Activated T-helper 1 cell treated with anti-CD3 and anti-CD28 coated beads, Interleukin-12 subunit alpha, Interleukin-12 subunit beta, Interleukin-2, Interleukin-4 antibody, amounts not matched to agents 30 ng/mL and 10 ng/mL and 1 ng/mL, durations not matched to agents 14 hours and 24 hours and 36 hours (primary cell): ENCODE measurements at regions of chr18 and their contacts with region 1.

Region 1: DNA sequence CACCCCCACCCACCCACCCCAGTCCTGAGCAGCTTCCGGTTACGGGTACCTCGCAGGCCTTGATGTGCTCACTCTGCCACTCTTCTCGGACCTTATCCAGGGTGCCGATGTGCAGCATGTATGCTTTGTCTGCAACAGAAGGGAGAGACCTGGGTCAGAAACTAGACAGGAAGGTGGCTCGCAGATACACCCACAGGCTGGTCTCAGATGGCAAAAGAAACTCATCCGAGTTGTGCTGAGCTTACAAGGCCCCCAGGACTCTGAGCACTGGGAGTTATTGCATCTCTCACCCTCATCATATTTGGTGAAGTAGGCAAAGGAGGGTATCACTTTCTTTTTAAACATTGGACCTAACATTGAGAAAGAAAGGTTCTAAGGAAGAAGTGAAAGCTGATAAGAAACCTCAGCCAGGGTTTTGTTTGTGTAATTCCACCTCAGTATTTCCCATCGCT is 30.6 kb upstream of the EPG5 start:
- DNase-seq: peak; percentile 4
- H3K4me3 Mint-ChIP-seq: peak overlapping the region; percentile 66
- H3K27ac Mint-ChIP-seq: peak overlapping the region; percentile 68
- H3K4me1 Mint-ChIP-seq: peaks cover 24% of the 10 kb centered on the region
- H3K27me3 Mint-ChIP-seq: no peaks in the 10 kb centered on the region

Region 2: DNA sequence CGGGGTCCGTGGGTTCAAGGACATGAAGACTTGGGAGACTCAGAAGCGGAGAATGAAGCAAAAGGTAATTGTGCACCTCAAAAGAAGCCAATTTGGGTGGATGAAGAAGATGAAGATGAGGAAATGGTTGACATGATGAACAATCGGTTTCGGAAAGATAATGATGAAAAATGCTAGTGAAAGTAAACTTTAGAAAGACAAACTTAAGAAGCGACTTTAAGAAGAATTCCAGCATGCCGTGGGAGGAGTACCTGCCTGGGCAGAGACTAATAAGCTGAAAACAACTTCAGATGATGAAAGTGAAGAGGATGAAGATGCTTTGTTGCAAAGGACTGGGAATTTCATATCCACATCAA is 30.8 kb after region 1 on chr18:
- intact Hi-C with region 1: loop called (anchors 1 kb)
- DNase-seq: no peak
- H3K4me3 Mint-ChIP-seq: peak overlapping the region; percentile 86
- H3K27ac Mint-ChIP-seq: peak overlapping the region; percentile 59
- H3K4me1 Mint-ChIP-seq: peaks cover 14% of the 10 kb centered on the region
- H3K27me3 Mint-ChIP-seq: peaks cover 21% of the 10 kb centered on the region

Region 3: DNA sequence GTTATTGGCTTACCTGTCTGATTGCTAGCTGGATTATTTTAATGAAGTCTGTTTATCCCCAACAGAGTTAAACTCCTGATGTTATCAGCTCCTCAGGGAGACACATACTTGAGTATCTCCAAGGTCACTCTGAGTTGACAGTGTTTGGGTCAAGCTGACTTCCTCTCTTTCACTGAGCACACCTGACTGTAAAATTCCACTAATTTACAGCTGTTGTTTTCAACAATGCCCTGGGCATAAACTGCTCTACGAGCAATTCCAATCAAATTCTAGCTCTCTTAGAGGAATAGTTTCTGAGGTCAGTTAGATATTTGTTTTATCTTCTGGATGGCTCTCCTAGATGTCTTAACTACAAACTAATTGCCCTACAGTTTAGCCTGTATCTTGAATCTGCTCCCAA is 116.1 kb after region 1 on chr18:
- intact Hi-C with region 1: no loop called
- DNase-seq: no peak
- H3K4me3 Mint-ChIP-seq: no peak overlapping the region
- H3K27ac Mint-ChIP-seq: no peak overlapping the region
- H3K4me1 Mint-ChIP-seq: no peaks in the 10 kb centered on the region
- H3K27me3 Mint-ChIP-seq: no peaks in the 10 kb centered on the region